PC-9 (cell line): ENCODE measurements at regions of chr19 and their contacts with region 1.

Region 1: DNA sequence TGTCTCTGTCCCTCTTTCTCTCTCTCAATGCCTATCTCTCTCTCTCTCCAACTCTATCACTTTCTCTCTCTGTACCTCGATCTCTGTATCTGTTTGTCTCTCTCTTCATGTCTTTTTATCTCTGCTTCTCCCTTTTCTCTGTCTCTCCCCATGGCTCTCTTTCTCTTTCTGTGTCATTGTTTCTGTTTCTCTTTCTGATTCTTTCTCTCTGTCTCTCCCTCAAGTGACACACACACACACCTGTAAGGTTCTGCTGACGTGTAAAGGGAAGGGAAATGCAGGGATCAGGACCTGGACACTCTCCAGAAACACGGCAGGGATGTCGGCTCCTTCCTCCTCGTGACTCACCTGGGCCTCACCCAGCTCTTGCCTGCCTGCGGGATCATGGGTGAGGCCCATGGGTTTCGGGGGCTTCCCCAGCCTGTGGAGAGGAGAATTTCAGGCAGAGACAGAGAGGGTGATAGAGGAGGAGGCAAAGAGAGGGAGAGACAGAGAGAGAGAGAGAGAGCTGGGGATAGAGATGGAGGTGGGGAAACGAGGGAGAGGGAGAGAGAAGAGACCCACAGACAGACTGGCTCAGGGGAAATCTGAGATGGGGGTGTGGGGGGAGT is 5.4 kb upstream of the PLAUR start:
- DNase-seq: peak; percentile 90 to 95
- H3K4me3 ChIP-seq: peak overlapping the region; percentile 47; the same call in 1 of the 2 replicates
- H3K27ac ChIP-seq: peak overlapping the region; percentile 99
- H3K4me1 ChIP-seq: peaks cover 46% of the 10 kb centered on the region
- H3K27me3 ChIP-seq: no peaks in the 10 kb centered on the region
- CTCF ChIP-seq: no peak

Region 2: DNA sequence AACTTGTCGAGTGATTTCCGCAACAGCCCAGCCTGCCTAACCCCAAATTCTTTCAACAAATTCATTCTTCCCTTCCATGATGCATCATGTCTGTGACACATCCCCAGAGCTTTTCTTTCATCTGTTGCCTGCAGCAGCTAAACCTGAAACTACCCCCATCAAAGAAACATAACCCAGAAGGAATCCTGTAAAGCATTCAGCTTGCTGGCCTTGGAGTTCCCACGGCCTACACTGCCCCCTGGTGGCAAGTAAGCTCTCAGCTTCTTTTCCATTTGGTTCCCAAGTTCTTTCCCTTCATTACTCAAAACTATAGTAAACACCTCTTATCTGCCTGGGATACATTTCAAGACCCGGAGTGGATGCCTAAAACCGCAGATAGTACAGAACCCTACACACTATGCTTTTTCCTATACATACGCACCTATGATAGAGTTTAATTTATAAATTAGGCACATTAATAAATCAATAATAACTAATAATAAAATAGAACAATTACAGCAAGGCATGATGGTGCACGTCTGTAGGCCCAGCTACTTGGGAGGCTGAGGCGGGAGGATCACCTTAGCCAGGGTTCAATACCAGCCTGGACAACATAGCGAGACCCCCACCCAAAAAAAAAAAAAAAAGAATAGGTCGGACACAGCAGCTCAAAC is 155.8 kb before region 1 on chr19:
- CTCF ChIA-PET with region 1: no interaction called
- POLR2A ChIA-PET with region 1: no interaction called
- intact Hi-C with region 1: no loop called
- DNase-seq: peak; percentile 86 to 97
- H3K4me3 ChIP-seq: no peak overlapping the region
- H3K27ac ChIP-seq: peak overlapping the region; percentile 95
- H3K4me1 ChIP-seq: peaks cover 40% of the 10 kb centered on the region
- H3K27me3 ChIP-seq: no peaks in the 10 kb centered on the region
- CTCF ChIP-seq: peak; percentile 94

Region 3: DNA sequence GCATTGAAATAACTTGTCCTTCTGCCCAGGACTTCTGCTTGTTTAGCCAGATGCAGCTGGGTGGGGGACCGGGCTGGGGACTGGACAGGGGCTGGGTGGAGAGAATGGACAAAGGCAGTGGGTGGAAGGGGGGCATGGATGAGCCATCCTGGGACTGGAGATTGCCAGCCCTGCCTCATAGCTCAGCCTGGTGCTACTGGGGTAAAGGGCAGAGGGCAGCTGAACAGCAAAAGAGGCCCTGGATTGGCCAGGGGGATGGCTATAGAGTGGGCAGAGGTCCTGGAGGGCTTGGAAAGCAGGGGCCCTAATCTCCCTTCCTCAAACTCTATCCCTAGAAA is 12.3 kb after region 1 on chr19:
- CTCF ChIA-PET with region 1: interaction called, 15 read pairs
- POLR2A ChIA-PET with region 1: interaction called, 14 read pairs
- intact Hi-C with region 1: loop called (anchors 1 kb)
- DNase-seq: peak in 1 of 2 experiments; percentile 39
- H3K4me3 ChIP-seq: no peak overlapping the region
- H3K27ac ChIP-seq: peak overlapping the region; percentile 31
- H3K4me1 ChIP-seq: peaks cover 23% of the 10 kb centered on the region
- H3K27me3 ChIP-seq: no peaks in the 10 kb centered on the region
- CTCF ChIP-seq: no peak

Region 4: GRCh38 chr19:43700395-43701000 is 25.1 kb after region 1 on chr19:
- CTCF ChIA-PET with region 1: no interaction called
- POLR2A ChIA-PET with region 1: interaction called, 4 read pairs
- intact Hi-C with region 1: loop called (anchors 1 kb)
- DNase-seq: peak in 1 of 2 experiments; percentile 61
- H3K4me3 ChIP-seq: peak overlapping the region; percentile 44; the same call in 1 of the 2 replicates
- H3K27ac ChIP-seq: peak overlapping the region; percentile 80
- H3K4me1 ChIP-seq: peaks cover 36% of the 10 kb centered on the region
- H3K27me3 ChIP-seq: no peaks in the 10 kb centered on the region
- CTCF ChIP-seq: no peak